Vagina (tissue), 2 donors: ENCODE measurements at regions of chr4 and their contacts with region 1.

Region 1: DNA sequence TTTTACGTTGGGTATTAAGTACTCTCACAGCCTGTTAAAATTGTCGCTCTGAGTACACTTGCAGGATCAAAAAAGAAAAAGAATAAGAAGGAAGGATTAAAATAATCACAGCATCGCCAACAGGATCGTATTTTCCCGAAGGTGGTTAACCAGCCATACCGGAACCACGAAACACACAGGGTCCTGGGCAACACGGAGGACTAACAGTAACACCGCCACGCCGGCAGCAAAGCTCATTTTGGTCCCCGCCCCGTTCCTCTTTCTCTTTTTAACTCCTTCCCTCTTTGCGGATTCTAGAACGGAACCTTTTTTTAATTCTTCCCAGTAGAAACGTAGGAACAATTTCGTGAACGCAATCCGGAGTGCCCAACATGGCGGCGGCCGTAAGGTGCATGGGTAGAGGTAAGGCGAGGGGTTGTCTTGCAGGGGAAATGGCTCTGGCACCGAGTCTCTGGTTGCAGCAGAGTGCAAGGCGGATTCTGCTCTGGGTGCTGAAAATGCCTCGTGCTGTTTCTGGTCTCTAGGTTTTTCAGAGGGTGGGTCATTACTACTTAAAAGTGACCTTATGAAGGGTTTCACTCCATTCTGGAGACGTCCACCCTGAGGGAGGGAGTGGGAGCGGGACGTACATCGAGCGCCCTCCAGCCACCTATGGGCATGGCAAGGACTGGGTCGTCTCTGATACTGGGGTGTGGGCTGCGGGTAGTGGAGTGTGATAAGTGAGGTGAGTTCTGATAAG is at the start of gene MRPL1:
- DNase-seq: peak in 1 of 2 donors; percentile 96
- H3K4me3 ChIP-seq: peak within 1 kb of the TSS; percentile 75 to 83
- H3K27ac ChIP-seq: peak within 1 kb of the TSS; percentile 96
- H3K4me1 ChIP-seq: peaks cover 24% of the 10 kb centered on the region
- H3K27me3 ChIP-seq: no peaks in the 10 kb centered on the region
- CTCF ChIP-seq: no peak
- POLR2A ChIP-seq: no peak
- total RNA-seq, gene MRPL1: 20.1 TPM

Region 2: GRCh38 chr4:77819843-77820648 is 42.6 kb before region 1 on chr4:
- intact Hi-C with region 1: loop called (anchors 5 kb)
- DNase-seq: peak in 1 of 2 donors; percentile 93
- H3K4me3 ChIP-seq: peak overlapping the region; percentile 65 to 83
- H3K27ac ChIP-seq: peak overlapping the region; percentile 100
- H3K4me1 ChIP-seq: peaks cover 44% of the 10 kb centered on the region
- H3K27me3 ChIP-seq: no peaks in the 10 kb centered on the region
- CTCF ChIP-seq: no peak
- POLR2A ChIP-seq: peak in 1 of 2 donors; percentile 88